MCF 10A (cell line): ENCODE measurements at regions of chr2 and their contacts with region 1.

Region 1: GRCh38 chr2:30447149-30448045 is at the start of gene LCLAT1:
- DNase-seq: peak; percentile 78
- H3K4me3 Mint-ChIP-seq: peak within 1 kb of the TSS; percentile 88
- H3K27ac Mint-ChIP-seq: peak within 1 kb of the TSS; percentile 99
- H3K4me1 Mint-ChIP-seq: peaks cover 4% of the 10 kb centered on the region
- H3K27me3 Mint-ChIP-seq: no peaks in the 10 kb centered on the region
- CTCF ChIP-seq: no peak
- total RNA-seq, gene LCLAT1: 27.5 and 29.0 TPM in 2 replicates

Region 2: GRCh38 chr2:30139131-30139870 is 308.1 kb before region 1 on chr2:
- CTCF ChIA-PET with region 1: no interaction called
- POLR2A ChIA-PET with region 1: no interaction called
- intact Hi-C with region 1: no loop called
- DNase-seq: no peak
- H3K4me3 Mint-ChIP-seq: no peak overlapping the region
- H3K27ac Mint-ChIP-seq: peak overlapping the region; percentile 63
- H3K4me1 Mint-ChIP-seq: peaks cover 24% of the 10 kb centered on the region
- H3K27me3 Mint-ChIP-seq: no peaks in the 10 kb centered on the region
- CTCF ChIP-seq: no peak

Region 3: DNA sequence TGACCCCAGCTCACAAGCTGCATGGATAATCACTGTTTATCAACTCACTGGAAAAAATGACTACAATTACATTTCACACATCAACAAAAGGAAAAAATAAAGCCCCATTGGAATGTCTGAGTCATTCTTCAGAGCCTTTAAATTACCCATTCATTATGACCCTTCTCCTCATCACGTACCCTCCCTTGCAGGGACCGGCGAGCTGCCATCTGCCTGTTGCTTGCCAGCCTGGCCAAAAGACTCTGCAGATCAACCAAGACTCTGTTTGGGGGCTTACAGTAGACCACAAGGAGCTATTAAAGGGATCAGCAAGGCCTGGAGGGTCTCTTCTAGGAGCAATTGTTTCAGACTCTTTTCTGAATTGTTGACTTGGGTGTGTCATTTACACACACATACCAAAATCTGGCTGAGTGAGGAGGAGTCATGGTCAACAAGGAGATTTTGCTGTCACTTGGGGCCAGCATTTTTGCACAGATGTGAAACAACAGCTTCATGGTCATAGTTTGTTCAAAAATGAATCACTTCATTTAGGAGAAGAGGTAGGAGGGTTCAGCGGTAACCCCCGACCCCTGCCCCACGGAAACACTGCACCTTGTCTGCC is 174.0 kb before region 1 on chr2:
- CTCF ChIA-PET with region 1: interaction called, 5 read pairs
- POLR2A ChIA-PET with region 1: no interaction called
- intact Hi-C with region 1: loop called (anchors 2 kb)
- DNase-seq: peak; percentile 57
- H3K4me3 Mint-ChIP-seq: no peak overlapping the region
- H3K27ac Mint-ChIP-seq: peak overlapping the region; percentile 19
- H3K4me1 Mint-ChIP-seq: peaks cover 28% of the 10 kb centered on the region
- H3K27me3 Mint-ChIP-seq: no peaks in the 10 kb centered on the region
- CTCF ChIP-seq: no peak

Region 4: DNA sequence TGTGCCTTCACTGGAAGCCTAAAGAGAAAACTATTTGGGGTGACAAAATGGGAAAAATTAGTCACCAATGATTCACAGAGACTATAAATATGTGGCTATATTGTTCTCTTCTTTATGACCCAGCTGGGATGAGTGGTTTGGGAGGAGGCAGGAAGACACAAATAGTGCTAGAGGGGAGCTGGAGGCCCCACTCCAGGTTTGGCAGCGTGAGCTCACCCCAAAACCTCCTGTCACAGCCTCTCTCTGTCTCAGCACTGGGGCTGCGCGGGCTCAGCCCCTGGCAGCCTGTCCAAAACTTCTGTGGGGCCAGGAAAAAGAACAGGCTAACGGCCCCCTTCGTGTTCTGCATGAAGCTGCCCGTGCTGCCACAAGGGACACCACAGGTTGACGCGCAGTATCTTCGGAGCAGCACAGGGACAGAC is 73.5 kb before region 1 on chr2:
- CTCF ChIA-PET with region 1: no interaction called
- POLR2A ChIA-PET with region 1: no interaction called
- intact Hi-C with region 1: no loop called
- DNase-seq: no peak
- H3K4me3 Mint-ChIP-seq: no peak overlapping the region
- H3K27ac Mint-ChIP-seq: no peak overlapping the region
- H3K4me1 Mint-ChIP-seq: no peaks in the 10 kb centered on the region
- H3K27me3 Mint-ChIP-seq: no peaks in the 10 kb centered on the region
- CTCF ChIP-seq: no peak

Region 5: GRCh38 chr2:30465171-30465545 is 17.8 kb after region 1 on chr2:
- CTCF ChIA-PET with region 1: no interaction called
- POLR2A ChIA-PET with region 1: no interaction called
- intact Hi-C with region 1: no loop called
- DNase-seq: no peak
- H3K4me3 Mint-ChIP-seq: no peak overlapping the region
- H3K27ac Mint-ChIP-seq: peak overlapping the region; percentile 77
- H3K4me1 Mint-ChIP-seq: peaks cover 11% of the 10 kb centered on the region
- H3K27me3 Mint-ChIP-seq: no peaks in the 10 kb centered on the region
- CTCF ChIP-seq: no peak